ENCODE measurements at regions of chr2 and their contacts with region 1.

Region 1: GRCh38 chr2:200483729-200484198 is 26.1 kb downstream of the KCTD18 start:
- DNase-seq: peak; percentile 20
- ATAC-seq: peak; percentile 78
- H3K4me3 ChIP-seq: no peak overlapping the region
- H3K27ac ChIP-seq: no peak overlapping the region
- H3K4me1 ChIP-seq: peaks cover 23% of the 10 kb centered on the region
- H3K27me3 ChIP-seq: no peaks in the 10 kb centered on the region
- CTCF ChIP-seq: peak; percentile 80

Region 2: DNA sequence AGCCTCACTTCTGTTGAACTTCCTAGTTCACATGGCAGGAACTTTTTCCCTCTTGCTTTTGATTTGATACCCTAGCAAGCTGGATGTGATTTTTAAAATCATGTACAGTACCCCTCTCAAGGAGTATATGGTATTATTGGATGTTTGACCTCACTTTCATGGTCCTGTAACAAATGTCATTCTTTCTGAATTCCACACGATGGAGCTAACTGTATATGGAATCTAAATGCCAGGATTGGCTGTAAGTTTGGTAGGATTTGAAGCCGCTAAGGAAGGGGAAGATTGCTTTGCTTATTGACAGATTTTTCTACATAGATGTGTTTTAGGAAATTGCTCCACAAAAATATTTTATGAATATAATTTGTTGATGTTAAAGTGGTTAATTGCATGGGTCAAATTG is 510.1 kb before region 1 on chr2:
- CTCF ChIA-PET with region 1: interaction called, 3 read pairs
- POLR2A ChIA-PET with region 1: interaction called, 17 read pairs
- in situ Hi-C with region 1: no loop called
- intact Hi-C with region 1: no loop called
- DNase-seq: no peak
- ATAC-seq: peak; percentile 89
- H3K4me3 ChIP-seq: no peak overlapping the region
- H3K27ac ChIP-seq: no peak overlapping the region
- H3K4me1 ChIP-seq: peaks cover 7% of the 10 kb centered on the region
- H3K27me3 ChIP-seq: no peaks in the 10 kb centered on the region
- CTCF ChIP-seq: peak; percentile 67; the same call in 1 of the 2 replicates

Region 3: DNA sequence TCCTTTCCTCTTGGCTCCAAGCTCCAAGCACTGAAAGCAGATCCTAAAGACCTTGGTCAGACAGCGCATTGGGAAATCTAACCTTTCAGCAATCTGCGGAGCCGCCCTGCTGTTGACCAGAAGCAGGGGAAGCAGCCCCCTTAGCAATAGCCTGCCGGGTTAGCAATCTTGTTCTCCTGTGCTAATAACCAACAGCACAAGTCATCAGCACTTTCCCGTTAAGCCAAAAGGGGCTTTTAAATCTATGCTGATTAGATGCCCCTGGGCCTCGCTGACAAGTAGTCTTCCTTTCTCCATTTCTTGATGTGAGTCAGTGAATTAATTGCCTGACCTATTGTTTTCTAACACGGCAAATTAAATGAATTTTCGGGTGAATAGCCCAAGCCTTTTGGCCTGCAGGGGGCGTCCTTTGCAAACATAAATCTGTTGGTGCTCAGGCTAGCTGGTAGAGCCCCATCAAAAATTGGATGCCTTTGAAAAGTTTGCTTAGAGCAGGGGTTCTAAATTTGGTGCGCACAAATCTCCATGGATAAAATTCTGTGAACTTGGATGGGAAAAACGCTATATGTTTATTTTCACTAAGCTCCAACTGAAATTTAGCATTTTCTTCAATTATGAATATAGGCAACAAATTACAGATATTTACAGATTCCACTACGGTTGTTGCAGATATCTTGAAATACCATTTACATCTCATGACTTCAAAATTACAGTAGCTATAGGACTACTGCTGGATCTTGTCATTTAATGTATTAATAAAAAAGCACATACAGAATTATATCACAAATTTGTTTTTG is 503.7 kb before region 1 on chr2:
- CTCF ChIA-PET with region 1: no interaction called
- POLR2A ChIA-PET with region 1: no interaction called
- in situ Hi-C with region 1: no loop called
- intact Hi-C with region 1: loop called (anchors 2 kb)
- DNase-seq: no peak
- ATAC-seq: peak; percentile 87
- H3K4me3 ChIP-seq: peak overlapping the region in 1 of 2 experiments; percentile 25; a peak in 2 of 4 replicates
- H3K27ac ChIP-seq: peak overlapping the region; percentile 74
- H3K4me1 ChIP-seq: peaks cover 17% of the 10 kb centered on the region
- H3K27me3 ChIP-seq: no peaks in the 10 kb centered on the region
- CTCF ChIP-seq: peak; percentile 89

Measured in Panc1 (cell line).